Activated naive CD8-positive, alpha-beta T cell treated with anti-CD3 and anti-CD28 coated beads, Interleukin-2, amount 10 ng/mL, durations not matched to agents 7 days and 5 days (primary cell): ENCODE measurements at regions of chr4 and their contacts with region 1.

Region 1: DNA sequence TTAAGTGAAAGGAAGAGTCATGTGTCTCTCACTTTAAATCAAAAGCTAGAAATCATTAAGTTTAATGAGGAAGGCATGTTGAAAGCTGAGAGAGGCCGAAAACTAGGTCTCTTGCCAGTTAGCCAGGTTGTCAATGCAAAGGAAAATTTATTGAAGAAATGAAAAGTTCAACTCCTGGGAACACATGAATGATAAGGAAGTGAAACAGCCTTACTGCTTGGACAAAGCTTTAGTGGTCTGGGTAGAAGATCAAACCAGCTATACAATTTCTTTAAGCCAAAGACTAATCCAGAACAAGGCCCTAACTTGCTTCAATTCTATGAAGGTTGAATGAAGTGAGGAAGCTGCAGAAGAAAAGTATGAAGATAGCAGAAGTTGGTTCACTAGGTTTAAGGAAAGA is 24.9 kb downstream of the RHOH start:
- DNase-seq: no peak
- ATAC-seq: no peak
- H3K4me3 Mint-ChIP-seq: peak overlapping the region; percentile 70
- H3K27ac Mint-ChIP-seq: peak overlapping the region; percentile 82
- H3K4me1 Mint-ChIP-seq: peaks cover 77% of the 10 kb centered on the region
- H3K27me3 Mint-ChIP-seq: no peaks in the 10 kb centered on the region

Region 2: DNA sequence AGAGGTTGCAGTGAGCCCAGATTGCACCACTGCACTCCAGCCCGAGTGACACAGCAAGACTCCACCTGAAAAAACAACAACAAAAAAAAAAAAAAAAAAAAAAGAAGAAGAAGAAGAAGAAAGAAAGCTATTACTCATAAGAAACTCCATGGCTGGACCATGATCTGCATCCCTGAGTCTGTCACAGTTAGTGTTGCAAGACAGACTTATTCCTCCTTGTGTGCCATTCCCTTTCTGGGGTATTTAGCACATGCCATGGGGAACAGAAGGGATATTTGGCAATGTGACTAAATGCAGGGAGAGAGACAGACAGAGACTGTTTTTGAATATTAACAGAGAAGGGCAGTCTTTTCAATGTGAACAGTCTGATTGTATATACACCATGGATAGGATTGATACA is 227.3 kb before region 1 on chr4:
- POLR2A ChIA-PET with region 1: no interaction called
- DNase-seq: no peak
- ATAC-seq: no peak
- H3K4me3 Mint-ChIP-seq: no peak overlapping the region
- H3K27ac Mint-ChIP-seq: no peak overlapping the region
- H3K4me1 Mint-ChIP-seq: no peaks in the 10 kb centered on the region
- H3K27me3 Mint-ChIP-seq: peaks cover 2% of the 10 kb centered on the region

Region 3: GRCh38 chr4:40238700-40239548 is 17.2 kb after region 1 on chr4:
- POLR2A ChIA-PET with region 1: interaction called, 17 read pairs
- DNase-seq: peak; percentile 60
- ATAC-seq: peak; percentile 90
- H3K4me3 Mint-ChIP-seq: peak overlapping the region; percentile 81
- H3K27ac Mint-ChIP-seq: peak overlapping the region; percentile 92
- H3K4me1 Mint-ChIP-seq: peaks cover 79% of the 10 kb centered on the region
- H3K27me3 Mint-ChIP-seq: no peaks in the 10 kb centered on the region

Region 4: DNA sequence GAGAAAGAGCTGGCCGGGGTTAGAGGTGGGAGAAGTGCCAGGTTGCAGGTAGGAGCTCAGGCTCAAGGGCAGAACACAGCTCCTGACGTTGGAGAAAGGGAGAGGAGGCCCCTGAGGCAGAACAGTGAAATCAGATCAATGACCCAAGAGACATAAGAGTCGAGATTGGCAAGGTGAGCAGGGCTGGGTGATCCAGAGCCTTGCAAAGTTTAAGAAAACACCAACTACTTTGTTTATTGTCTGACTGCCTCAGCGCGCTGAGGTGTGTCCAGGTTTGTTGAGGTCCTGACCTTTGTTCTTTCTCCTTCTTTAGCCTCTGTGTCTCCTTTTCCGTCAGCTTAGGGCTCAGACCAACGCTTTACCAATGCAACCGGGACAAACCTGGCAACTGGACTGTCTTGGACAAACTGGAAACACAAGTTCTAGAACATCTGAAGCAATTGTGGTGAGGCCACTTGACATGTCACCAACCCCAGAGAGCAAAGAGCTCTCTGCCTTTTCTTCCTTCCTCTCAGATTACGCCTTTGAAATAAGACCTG is 141.7 kb after region 1 on chr4:
- POLR2A ChIA-PET with region 1: no interaction called
- DNase-seq: no peak
- ATAC-seq: no peak
- H3K4me3 Mint-ChIP-seq: no peak overlapping the region
- H3K27ac Mint-ChIP-seq: no peak overlapping the region
- H3K4me1 Mint-ChIP-seq: peaks cover 1% of the 10 kb centered on the region
- H3K27me3 Mint-ChIP-seq: peaks cover 5% of the 10 kb centered on the region